ENCODE measurements at regions of chr7 and their contacts with region 1.

Region 1: DNA sequence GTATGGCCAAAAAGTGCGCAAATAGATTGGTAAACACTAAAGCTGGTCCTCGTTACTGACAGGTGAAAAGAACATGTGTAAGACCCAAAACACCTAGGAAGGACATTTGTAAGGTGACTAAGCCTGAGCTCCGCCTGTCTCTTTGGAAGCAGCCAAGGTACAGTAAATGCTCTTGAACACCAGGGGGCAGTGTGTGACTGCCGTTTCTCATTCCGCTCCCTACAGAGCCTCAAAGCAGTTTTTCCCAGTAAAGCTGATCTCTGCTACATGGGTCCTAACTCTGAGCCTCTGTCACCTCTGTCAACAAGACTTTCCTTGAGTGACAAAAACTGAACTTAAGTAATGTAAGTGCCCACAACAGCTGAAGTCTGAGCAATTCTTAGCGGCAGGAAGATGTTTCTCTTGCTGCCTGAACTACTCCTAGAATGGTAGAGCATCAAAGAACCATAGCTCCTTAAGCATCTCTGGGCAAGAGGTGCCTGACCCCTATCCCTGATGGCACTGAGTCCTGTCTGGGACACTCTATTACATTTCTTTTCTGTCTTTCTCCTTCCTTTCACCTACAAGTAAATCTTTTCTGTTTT is 238.0 kb upstream of the INHBA start:
- DNase-seq: peak; percentile 24 to 72
- ATAC-seq: peak; percentile 79 to 80 (median 80)
- H3K4me3 ChIP-seq: no peak overlapping the region
- H3K4me3 Mint-ChIP-seq: no peak overlapping the region
- H3K27ac ChIP-seq: no peak overlapping the region
- H3K27ac Mint-ChIP-seq: no peak overlapping the region
- H3K4me1 ChIP-seq: peaks cover 10% of the 10 kb centered on the region
- H3K4me1 Mint-ChIP-seq: peaks cover 12 to 18% of the 10 kb centered on the region in 2 donors
- H3K27me3 ChIP-seq: no peaks in the 10 kb centered on the region
- H3K27me3 Mint-ChIP-seq: peaks cover 29 to 35% of the 10 kb centered on the region in 2 donors
- CTCF ChIP-seq: peak; percentile 81

Region 2: GRCh38 chr7:41921453-41921981 is 19.3 kb before region 1 on chr7:
- intact Hi-C with region 1: no loop called
- DNase-seq: no peak
- ATAC-seq: no peak
- H3K4me3 ChIP-seq: no peak overlapping the region
- H3K4me3 Mint-ChIP-seq: no peak overlapping the region
- H3K27ac ChIP-seq: no peak overlapping the region
- H3K27ac Mint-ChIP-seq: no peak overlapping the region
- H3K4me1 ChIP-seq: no peaks in the 10 kb centered on the region
- H3K4me1 Mint-ChIP-seq: no peaks in the 10 kb centered on the region
- H3K27me3 ChIP-seq: no peaks in the 10 kb centered on the region
- H3K27me3 Mint-ChIP-seq: peaks cover 12 to 21% of the 10 kb centered on the region in 2 donors
- CTCF ChIP-seq: no peak

Region 3: GRCh38 chr7:42843205-42843800 is 902.5 kb after region 1 on chr7:
- intact Hi-C with region 1: loop called (anchors 5 kb)
- DNase-seq: peak in 1 of 2 donors; percentile 9
- ATAC-seq: peak in 2 of 3 donors; percentile 24 to 51
- H3K4me3 ChIP-seq: no peak overlapping the region
- H3K4me3 Mint-ChIP-seq: no peak overlapping the region
- H3K27ac ChIP-seq: no peak overlapping the region
- H3K27ac Mint-ChIP-seq: no peak overlapping the region
- H3K4me1 ChIP-seq: no peaks in the 10 kb centered on the region
- H3K4me1 Mint-ChIP-seq: no peaks in the 10 kb centered on the region
- H3K27me3 ChIP-seq: peaks cover 2% of the 10 kb centered on the region
- H3K27me3 Mint-ChIP-seq: peaks cover 13 to 48% of the 10 kb centered on the region in 2 donors
- CTCF ChIP-seq: no peak

Region 4: DNA sequence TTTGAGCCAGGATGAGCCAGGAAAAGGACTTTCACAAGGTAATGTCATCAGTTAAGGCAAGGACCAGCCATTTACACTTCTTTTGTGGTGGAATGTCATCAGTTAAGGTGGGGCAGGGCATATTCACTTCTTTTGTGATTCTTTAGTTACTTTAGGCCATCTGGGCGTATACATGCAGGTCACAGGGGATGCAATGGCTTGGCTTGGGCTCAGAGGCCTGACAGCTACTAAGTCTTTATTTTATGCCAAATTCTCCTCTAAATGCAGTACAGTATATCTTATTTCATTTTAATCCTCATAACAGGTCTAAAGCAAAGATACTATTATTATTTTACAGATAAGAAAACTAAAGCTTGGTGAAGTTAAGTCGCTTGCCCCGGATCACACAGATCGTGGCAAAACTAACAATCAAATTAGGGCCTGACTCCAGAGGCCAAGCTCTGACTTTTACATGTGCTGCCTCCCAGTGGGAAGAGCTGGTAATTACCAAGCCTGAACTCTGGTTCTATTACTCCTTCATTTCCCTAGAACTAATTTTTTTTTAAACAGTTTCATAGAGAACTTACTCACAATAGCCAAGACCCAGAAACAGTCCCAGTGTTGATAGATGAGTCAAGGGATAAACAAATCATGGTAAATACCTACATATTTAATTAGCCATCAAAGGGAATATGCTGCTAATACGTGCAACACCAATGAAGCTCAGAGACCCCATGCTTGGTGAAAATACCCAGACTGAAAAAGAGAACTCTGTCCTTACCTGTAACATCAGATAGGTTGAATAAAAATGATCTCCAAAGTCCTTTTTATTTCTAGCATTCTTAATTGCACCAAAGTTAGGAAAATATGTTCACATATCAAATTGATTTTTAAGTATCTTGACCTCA is 935.6 kb after region 1 on chr7:
- intact Hi-C with region 1: loop called (anchors 1 kb)
- DNase-seq: peak in 1 of 2 donors; percentile 64
- ATAC-seq: peak; percentile 50 to 71 (median 58)
- H3K4me3 ChIP-seq: no peak overlapping the region
- H3K4me3 Mint-ChIP-seq: no peak overlapping the region
- H3K27ac ChIP-seq: no peak overlapping the region
- H3K27ac Mint-ChIP-seq: no peak overlapping the region
- H3K4me1 ChIP-seq: no peaks in the 10 kb centered on the region
- H3K4me1 Mint-ChIP-seq: peaks cover 0 to 3% of the 10 kb centered on the region in 2 donors
- H3K27me3 ChIP-seq: peaks cover 3% of the 10 kb centered on the region
- H3K27me3 Mint-ChIP-seq: peaks cover 5 to 14% of the 10 kb centered on the region in 2 donors
- CTCF ChIP-seq: peak; percentile 73

Region 5: GRCh38 chr7:43439631-43440401 is 1499.0 kb after region 1 on chr7:
- intact Hi-C with region 1: loop called (anchors 5 kb)
- DNase-seq: peak; percentile 30 to 72
- ATAC-seq: peak; percentile 44 to 75 (median 52)
- H3K4me3 ChIP-seq: no peak overlapping the region
- H3K4me3 Mint-ChIP-seq: no peak overlapping the region
- H3K27ac ChIP-seq: no peak overlapping the region
- H3K27ac Mint-ChIP-seq: no peak overlapping the region
- H3K4me1 ChIP-seq: no peaks in the 10 kb centered on the region
- H3K4me1 Mint-ChIP-seq: no peaks in the 10 kb centered on the region
- H3K27me3 ChIP-seq: no peaks in the 10 kb centered on the region
- H3K27me3 Mint-ChIP-seq: peaks cover 8 to 16% of the 10 kb centered on the region in 2 donors
- CTCF ChIP-seq: peak; percentile 80

Region 6: DNA sequence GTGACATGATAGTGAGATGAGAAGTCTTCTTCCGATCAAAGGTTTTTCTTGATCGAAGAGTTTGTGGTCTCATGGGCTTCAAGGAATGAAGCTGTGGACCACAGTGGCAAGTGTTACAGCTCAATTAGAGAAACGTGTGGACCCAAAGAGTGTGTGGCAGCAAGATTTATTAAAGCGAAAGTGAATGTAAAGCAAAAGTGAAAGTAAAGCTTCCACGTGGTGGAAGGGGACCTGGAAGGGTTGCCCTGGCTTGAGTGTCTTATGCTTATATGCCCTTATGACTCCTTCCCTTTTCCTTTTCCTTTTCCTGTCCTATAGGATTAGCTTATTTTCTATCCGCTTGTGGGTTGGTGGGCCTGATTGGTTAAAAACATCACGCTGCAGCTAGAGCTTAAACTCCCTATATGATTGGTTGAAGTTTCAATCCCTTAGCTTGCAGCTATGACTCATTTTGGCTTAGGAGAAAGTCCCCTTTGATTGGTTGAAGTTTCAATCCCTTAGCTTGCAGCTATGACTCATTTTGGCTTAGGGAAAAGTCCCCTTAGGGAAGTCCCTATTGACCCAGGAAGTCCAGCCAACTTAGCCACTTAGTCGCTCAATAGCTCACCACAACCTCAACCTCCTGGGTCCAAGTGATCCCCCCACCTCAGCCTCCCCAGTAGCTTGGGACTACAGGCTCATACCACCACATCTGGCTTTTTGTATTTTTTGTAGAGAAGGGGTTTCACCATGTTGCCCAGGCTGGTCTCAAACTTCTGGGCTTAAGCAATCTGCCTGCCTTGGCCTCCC is 1893.8 kb after region 1 on chr7:
- intact Hi-C with region 1: loop called (anchors 5 kb)
- DNase-seq: peak; percentile 29 to 80
- ATAC-seq: peak; percentile 67 to 75 (median 70)
- H3K4me3 ChIP-seq: peak overlapping the region; percentile 56
- H3K4me3 Mint-ChIP-seq: peak overlapping the region; percentile 84
- H3K27ac ChIP-seq: peak overlapping the region; percentile 81
- H3K27ac Mint-ChIP-seq: peak overlapping the region; percentile 83 to 91
- H3K4me1 ChIP-seq: peaks cover 18% of the 10 kb centered on the region
- H3K4me1 Mint-ChIP-seq: peaks cover 16 to 19% of the 10 kb centered on the region in 2 donors
- H3K27me3 ChIP-seq: no peaks in the 10 kb centered on the region
- H3K27me3 Mint-ChIP-seq: no peaks in the 10 kb centered on the region
- CTCF ChIP-seq: no peak

Measured in natural killer cell (primary cell).